Activated CD8-positive, alpha-beta T cell treated with anti-CD3 and anti-CD28 coated beads for 36 hours (primary cell): ENCODE measurements at regions of chr9 and their contacts with region 1.

Region 1: DNA sequence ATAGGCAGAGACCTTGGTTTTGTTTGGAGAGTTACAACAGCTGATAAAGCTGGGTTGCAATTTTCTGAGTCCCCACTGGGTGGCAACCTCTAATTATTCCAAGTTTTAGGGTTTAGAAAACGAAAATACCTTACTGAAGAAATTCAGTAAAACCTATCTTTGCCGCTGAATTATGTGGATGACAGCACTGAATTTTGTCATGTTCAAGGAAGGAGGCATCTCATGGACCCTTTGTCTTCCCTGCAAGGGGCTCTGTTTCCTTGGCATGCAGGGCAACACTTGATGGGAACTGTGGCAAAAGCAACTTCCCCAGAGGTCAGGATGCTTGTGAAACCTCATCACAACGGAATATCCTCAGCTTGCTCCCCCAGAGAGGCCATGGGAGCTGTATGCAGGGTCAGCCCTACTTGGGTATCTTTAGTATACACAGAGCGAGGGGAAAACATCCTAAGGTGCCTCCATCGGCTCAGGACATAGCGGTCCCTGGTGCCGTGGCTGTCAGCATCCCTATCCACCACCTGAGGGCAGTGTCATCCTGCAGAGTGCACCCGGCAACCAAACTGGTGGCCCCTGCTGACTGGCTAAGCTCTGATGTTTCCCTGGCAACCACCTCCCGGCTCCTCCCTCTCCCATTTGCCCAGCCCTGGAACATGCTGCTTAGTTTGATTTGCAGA is 123.1 kb downstream of the RXRA start:
- DNase-seq: peak; percentile 91
- ATAC-seq: peak; percentile 100
- H3K4me3 Mint-ChIP-seq: no peak overlapping the region
- H3K27ac Mint-ChIP-seq: no peak overlapping the region
- H3K4me1 Mint-ChIP-seq: peaks cover 3% of the 10 kb centered on the region
- H3K27me3 Mint-ChIP-seq: no peaks in the 10 kb centered on the region
- CTCF ChIP-seq: peak; percentile 75

Region 2: GRCh38 chr9:134171316-134172197 is 277.8 kb before region 1 on chr9:
- CTCF ChIA-PET with region 1: interaction called, 17 read pairs
- POLR2A ChIA-PET with region 1: no interaction called
- intact Hi-C with region 1: loop called (anchors 5 kb)
- DNase-seq: no peak
- ATAC-seq: no peak
- H3K4me3 Mint-ChIP-seq: no peak overlapping the region
- H3K27ac Mint-ChIP-seq: no peak overlapping the region
- H3K4me1 Mint-ChIP-seq: peaks cover under 1% of the 10 kb centered on the region
- H3K27me3 Mint-ChIP-seq: no peaks in the 10 kb centered on the region
- CTCF ChIP-seq: no peak

Region 3: GRCh38 chr9:134293611-134294165 is 155.7 kb before region 1 on chr9:
- CTCF ChIA-PET with region 1: no interaction called
- POLR2A ChIA-PET with region 1: no interaction called
- intact Hi-C with region 1: no loop called
- DNase-seq: no peak
- ATAC-seq: no peak
- H3K4me3 Mint-ChIP-seq: no peak overlapping the region
- H3K27ac Mint-ChIP-seq: no peak overlapping the region
- H3K4me1 Mint-ChIP-seq: peaks cover 2% of the 10 kb centered on the region
- H3K27me3 Mint-ChIP-seq: no peaks in the 10 kb centered on the region
- CTCF ChIP-seq: no peak

Region 4: DNA sequence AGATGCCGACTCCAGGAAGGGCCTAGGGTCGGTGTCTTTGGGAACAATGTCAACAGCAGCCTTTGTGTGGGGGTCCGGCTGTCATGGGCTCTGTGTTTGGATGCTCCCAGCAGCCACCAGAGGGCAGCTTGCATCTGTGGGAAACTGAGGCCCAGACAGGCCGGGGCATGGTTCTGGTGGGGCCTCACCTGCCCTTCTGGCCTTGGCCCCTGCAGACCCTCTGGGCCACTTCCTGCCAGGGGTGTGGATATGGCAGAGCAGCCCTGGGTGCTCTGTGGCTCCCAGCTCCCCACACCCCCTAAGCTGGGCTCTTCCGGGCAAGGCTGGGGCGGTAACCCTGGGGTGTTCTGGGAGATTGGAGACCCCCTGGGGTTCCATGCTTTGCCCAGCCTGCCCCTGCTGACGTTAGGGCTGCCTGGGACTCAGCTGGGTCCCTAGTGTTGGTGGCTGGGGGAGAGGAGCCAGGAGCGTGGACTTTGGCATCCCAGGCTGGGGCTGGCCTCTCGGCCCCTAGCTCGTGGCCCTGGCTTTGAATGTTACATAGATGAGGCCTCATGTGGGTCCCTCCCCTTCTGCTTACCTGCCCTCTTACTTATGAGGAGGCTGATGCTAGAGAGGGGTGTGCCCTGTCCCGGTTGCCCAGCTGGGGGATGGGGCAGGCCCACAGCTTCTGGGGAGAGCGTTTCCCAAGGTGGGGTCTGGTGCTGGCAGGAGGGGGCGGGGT is 84.8 kb before region 1 on chr9:
- CTCF ChIA-PET with region 1: interaction called, 12 read pairs
- POLR2A ChIA-PET with region 1: no interaction called
- intact Hi-C with region 1: no loop called
- DNase-seq: peak; percentile 57
- ATAC-seq: peak; percentile 65
- H3K4me3 Mint-ChIP-seq: no peak overlapping the region
- H3K27ac Mint-ChIP-seq: no peak overlapping the region
- H3K4me1 Mint-ChIP-seq: no peaks in the 10 kb centered on the region
- H3K27me3 Mint-ChIP-seq: no peaks in the 10 kb centered on the region
- CTCF ChIP-seq: peak; percentile 61

Region 5: DNA sequence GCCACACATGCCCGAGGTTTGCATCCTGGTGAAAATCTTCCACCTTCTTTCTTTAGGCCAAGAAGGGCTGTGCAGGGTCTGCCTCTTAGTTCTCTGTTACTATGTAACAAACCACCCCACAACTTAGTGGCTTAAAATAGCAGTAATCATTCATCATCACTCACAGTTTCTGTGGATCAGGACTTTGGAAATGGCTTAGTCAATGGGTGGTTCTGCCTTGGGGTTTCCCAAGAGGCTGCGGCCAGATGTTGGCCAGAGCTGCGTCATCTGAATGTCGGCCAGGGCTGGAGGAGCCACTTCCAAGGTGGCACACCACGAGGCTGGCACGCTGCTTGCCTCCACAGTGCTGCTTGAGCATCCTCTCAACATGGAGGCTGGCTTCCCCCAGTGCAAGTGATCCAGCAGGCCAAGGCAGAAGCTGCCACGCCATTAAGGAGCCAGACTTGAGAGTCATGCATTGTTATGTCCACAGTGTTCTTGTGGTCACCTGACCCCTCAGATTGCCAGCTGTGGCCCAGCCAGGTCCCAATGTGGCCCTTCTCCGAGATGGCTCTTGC is 12.1 kb after region 1 on chr9:
- CTCF ChIA-PET with region 1: interaction called, 18 read pairs
- POLR2A ChIA-PET with region 1: interaction called, 4 read pairs
- intact Hi-C with region 1: no loop called
- DNase-seq: no peak
- ATAC-seq: no peak
- H3K4me3 Mint-ChIP-seq: no peak overlapping the region
- H3K27ac Mint-ChIP-seq: no peak overlapping the region
- H3K4me1 Mint-ChIP-seq: peaks cover 9% of the 10 kb centered on the region
- H3K27me3 Mint-ChIP-seq: no peaks in the 10 kb centered on the region
- CTCF ChIP-seq: no peak

Region 6: GRCh38 chr9:134738869-134739659 is 289.7 kb after region 1 on chr9:
- CTCF ChIA-PET with region 1: interaction called, 20 read pairs
- POLR2A ChIA-PET with region 1: no interaction called
- intact Hi-C with region 1: no loop called
- DNase-seq: peak; percentile 57
- ATAC-seq: peak; percentile 55
- H3K4me3 Mint-ChIP-seq: no peak overlapping the region
- H3K27ac Mint-ChIP-seq: no peak overlapping the region
- H3K4me1 Mint-ChIP-seq: no peaks in the 10 kb centered on the region
- H3K27me3 Mint-ChIP-seq: no peaks in the 10 kb centered on the region
- CTCF ChIP-seq: peak; percentile 91